PC-3 (cell line): ENCODE measurements at regions of chrX and their contacts with region 1.

Region 1: GRCh38 chrX:29813174-29813573 is 402.2 kb upstream of the MAGEB2 start:
- DNase-seq: no peak
- ATAC-seq: no peak
- H3K4me3 ChIP-seq: no peak overlapping the region
- H3K27ac ChIP-seq: no peak overlapping the region
- H3K4me1 ChIP-seq: no peaks in the 10 kb centered on the region
- H3K27me3 ChIP-seq: no peaks in the 10 kb centered on the region
- CTCF ChIP-seq: no peak

Region 2: DNA sequence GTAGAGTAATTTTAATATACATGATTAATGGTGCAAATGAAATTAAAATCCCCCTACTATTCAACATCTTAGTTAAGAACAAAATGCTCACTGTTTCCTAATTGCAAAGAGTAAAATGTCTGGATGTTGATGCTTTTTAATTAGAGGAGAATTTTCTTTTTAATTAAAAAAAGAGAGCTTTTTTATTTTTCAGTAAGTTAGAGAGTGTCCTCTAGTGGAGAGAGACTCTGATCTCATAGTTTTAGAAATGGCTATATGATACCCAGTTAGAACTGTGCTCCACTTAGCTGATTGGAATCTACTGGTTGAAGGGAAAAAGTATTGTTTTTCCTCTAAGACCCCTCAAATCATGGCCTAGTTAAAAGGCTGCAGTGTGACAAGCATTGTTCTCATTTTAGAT is 90.2 kb after region 1 on chrX:
- CTCF ChIA-PET with region 1: no interaction called
- POLR2A ChIA-PET with region 1: no interaction called
- intact Hi-C with region 1: loop called (anchors 2 kb)
- DNase-seq: peak; percentile 23
- ATAC-seq: 0 out of 2 replicates have a peak, but pooled peaks have one; percentile 50
- H3K4me3 ChIP-seq: no peak overlapping the region
- H3K27ac ChIP-seq: no peak overlapping the region
- H3K4me1 ChIP-seq: no peaks in the 10 kb centered on the region
- H3K27me3 ChIP-seq: no peaks in the 10 kb centered on the region
- CTCF ChIP-seq: peak; percentile 65

Region 3: GRCh38 chrX:30027636-30028035 is 214.5 kb after region 1 on chrX:
- CTCF ChIA-PET with region 1: no interaction called
- POLR2A ChIA-PET with region 1: no interaction called
- intact Hi-C with region 1: no loop called
- DNase-seq: peak; percentile 31
- ATAC-seq: no peak
- H3K4me3 ChIP-seq: no peak overlapping the region
- H3K27ac ChIP-seq: no peak overlapping the region
- H3K4me1 ChIP-seq: peaks cover 9% of the 10 kb centered on the region; the same call in 1 of the 2 replicates
- H3K27me3 ChIP-seq: no peaks in the 10 kb centered on the region
- CTCF ChIP-seq: no peak